IMR-90 (cell line): ENCODE measurements at regions of chr6 and their contacts with region 1.

Region 1: DNA sequence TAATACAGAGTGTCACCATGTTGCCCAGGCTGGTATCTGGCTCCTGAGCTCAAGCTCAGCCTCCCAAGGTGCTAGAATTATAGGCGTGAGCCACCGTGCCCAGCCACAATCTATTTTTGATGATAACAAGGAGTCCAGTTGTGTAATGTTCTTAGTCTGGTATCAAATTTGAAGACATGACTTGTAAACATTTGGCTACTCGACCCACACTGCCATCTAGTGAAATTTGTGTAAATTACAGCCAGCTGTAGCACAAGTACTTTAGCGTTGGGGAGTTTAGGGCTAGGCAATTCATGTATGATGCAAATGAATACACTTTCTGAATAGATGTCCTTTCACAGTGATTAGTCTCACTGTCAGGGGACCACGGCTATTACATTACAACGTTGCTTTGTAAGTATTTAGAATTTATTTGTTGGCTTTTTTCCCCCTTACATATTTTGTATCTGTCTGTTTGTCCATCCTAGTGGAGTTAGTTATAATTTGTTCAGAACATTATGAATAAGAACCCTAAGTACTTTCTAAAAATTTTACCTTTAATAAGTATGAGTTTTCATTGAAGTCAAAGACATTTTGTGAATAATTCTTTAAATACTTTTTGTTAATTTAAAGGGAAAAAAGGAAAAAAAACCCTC is 139.7 kb downstream of the PRDM13 start:
- DNase-seq: peak; percentile 74
- ATAC-seq: peak; percentile 94
- H3K4me3 ChIP-seq: no peak overlapping the region
- H3K27ac ChIP-seq: no peak overlapping the region
- H3K4me1 ChIP-seq: no peaks in the 10 kb centered on the region
- H3K27me3 ChIP-seq: no peaks in the 10 kb centered on the region; the same call in 1 of the 2 replicates
- CTCF ChIP-seq: peak; percentile 82
- POLR2A ChIP-seq: no peak
- RAD21 ChIP-seq: peak; percentile 74

Region 2: GRCh38 chr6:99282491-99283062 is 463.8 kb before region 1 on chr6:
- CTCF ChIA-PET with region 1: no interaction called
- POLR2A ChIA-PET with region 1: no interaction called
- dilution Hi-C with region 1: no loop called
- in situ Hi-C with region 1: no loop called
- intact Hi-C with region 1: loop called (anchors 10 kb)
- DNase-seq: peak; percentile 30
- ATAC-seq: peak; percentile 86
- H3K4me3 ChIP-seq: no peak overlapping the region
- H3K27ac ChIP-seq: no peak overlapping the region
- H3K4me1 ChIP-seq: no peaks in the 10 kb centered on the region
- H3K27me3 ChIP-seq: no peaks in the 10 kb centered on the region
- CTCF ChIP-seq: peak; percentile 54
- POLR2A ChIP-seq: no peak
- RAD21 ChIP-seq: peak; percentile 36; the same call in 1 of the 2 replicates

Region 3: GRCh38 chr6:99467509-99468106 is 278.8 kb before region 1 on chr6:
- CTCF ChIA-PET with region 1: interaction called, 3 read pairs
- POLR2A ChIA-PET with region 1: no interaction called
- dilution Hi-C with region 1: no loop called
- in situ Hi-C with region 1: loop called (anchors 10 kb)
- intact Hi-C with region 1: loop called (anchors 1 kb)
- DNase-seq: peak; percentile 32
- ATAC-seq: peak; percentile 51; the same call in 1 of the 2 replicates
- H3K4me3 ChIP-seq: no peak overlapping the region
- H3K27ac ChIP-seq: no peak overlapping the region
- H3K4me1 ChIP-seq: no peaks in the 10 kb centered on the region
- H3K27me3 ChIP-seq: no peaks in the 10 kb centered on the region
- CTCF ChIP-seq: peak; percentile 68
- POLR2A ChIP-seq: no peak
- RAD21 ChIP-seq: peak; percentile 69

Region 4: DNA sequence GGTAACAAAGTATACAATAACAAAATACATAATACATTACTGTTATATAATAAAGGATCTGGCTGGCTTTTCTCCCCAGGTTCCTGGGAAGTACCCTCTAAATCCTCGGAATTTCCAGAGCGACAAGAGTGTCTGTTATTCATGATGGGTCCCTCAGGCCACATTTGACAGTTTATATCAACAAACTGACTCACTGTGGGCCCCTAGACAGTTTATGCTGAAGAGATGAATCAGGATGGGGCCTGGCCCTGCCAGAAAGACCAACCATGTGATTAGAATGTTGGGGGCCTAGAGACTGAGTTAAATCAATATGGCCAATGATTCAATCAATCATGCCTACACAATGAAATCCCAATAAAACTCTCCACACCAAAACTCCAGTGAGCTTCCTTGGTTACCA is 244.6 kb before region 1 on chr6:
- CTCF ChIA-PET with region 1: no interaction called
- POLR2A ChIA-PET with region 1: no interaction called
- dilution Hi-C with region 1: no loop called
- in situ Hi-C with region 1: no loop called
- intact Hi-C with region 1: no loop called
- DNase-seq: peak; percentile 40
- ATAC-seq: peak; percentile 24; the same call in 1 of the 2 replicates
- H3K4me3 ChIP-seq: no peak overlapping the region
- H3K27ac ChIP-seq: no peak overlapping the region
- H3K4me1 ChIP-seq: peaks cover 8% of the 10 kb centered on the region; the same call in 1 of the 2 replicates
- H3K27me3 ChIP-seq: no peaks in the 10 kb centered on the region
- CTCF ChIP-seq: no peak
- POLR2A ChIP-seq: no peak
- RAD21 ChIP-seq: no peak

Region 5: DNA sequence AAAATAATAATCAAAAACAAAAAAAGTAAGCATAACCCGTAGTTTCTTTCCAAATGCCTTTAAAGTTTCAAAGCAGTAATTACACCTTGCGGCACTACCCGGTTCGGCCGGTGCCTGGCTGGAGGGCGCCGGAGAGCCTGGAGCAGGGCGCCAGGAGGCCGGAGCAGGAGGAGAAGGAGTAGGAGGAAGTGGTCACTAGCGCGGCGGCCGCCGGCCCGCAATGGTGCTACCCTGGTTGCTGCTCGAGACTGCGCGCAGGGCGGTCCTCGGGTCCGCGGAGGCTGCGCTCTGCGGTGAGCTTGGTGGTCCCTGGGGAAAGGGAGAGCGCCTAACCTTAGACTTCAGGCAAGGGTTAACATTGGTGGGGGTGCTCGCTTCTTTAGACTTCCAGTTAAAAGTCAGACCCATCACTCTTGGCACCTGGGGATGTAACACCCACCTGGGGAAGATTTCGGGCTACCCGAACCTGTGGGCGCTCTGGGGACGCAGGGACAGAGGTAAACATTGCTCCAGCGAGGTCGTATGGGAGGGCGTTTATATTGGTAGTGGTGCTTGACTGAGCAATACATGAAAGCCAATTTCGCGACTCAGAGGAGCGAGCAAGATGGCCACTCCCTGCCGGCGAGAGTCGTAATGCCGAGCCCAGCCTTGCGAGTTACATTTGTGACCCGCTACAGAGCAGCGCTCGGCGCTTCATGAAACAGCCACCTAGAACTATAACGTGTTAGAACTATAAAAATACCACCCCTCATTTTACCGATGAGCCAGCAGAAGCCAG is 225.3 kb before region 1 on chr6:
- CTCF ChIA-PET with region 1: no interaction called
- POLR2A ChIA-PET with region 1: no interaction called
- dilution Hi-C with region 1: no loop called
- in situ Hi-C with region 1: no loop called
- intact Hi-C with region 1: loop called (anchors 5 kb)
- DNase-seq: peak; percentile 77
- ATAC-seq: peak; percentile 95
- H3K4me3 ChIP-seq: peak overlapping the region; percentile 87
- H3K27ac ChIP-seq: peak overlapping the region; percentile 96
- H3K4me1 ChIP-seq: peaks cover 2% of the 10 kb centered on the region; the same call in 1 of the 2 replicates
- H3K27me3 ChIP-seq: no peaks in the 10 kb centered on the region
- CTCF ChIP-seq: peak; percentile 80
- POLR2A ChIP-seq: peak; percentile 84
- RAD21 ChIP-seq: peak; percentile 54

Region 6: DNA sequence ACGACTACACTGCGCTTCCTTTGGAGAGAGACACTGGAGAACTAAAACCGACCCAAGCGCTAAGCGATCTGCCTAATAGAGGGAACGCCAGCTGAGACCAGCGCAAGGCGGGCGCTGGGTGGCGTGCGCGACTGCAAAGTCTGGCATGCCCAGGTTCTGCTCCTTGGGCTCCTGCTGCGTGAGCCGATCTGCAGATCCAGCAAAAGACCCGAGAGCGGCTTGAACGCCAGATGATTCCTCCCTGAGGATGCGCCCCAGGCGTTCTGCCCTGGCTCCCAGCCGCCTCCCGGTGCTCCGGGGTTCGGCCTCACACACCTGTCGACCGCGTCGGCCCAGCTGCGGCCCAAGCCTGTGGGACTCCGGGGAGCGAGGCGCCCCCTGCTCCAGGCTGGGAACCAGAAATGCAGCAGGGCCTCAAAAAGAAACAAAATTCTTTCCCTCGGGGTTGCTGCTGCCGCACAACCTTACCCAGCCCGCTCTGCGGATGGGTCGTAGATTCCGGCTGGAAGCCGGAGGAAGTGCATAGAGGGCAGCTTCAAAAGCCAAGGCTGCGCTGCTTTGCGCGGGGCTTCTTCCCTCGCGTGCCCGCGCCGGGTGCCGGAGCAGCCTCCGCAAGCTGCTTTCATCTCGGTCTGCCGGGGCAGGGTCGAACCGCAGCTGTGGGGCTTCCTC is 157.6 kb before region 1 on chr6:
- CTCF ChIA-PET with region 1: interaction called, 4 read pairs
- POLR2A ChIA-PET with region 1: no interaction called
- dilution Hi-C with region 1: no loop called
- in situ Hi-C with region 1: no loop called
- intact Hi-C with region 1: loop called (anchors 1 kb)
- DNase-seq: peak; percentile 59
- ATAC-seq: peak; percentile 90
- H3K4me3 ChIP-seq: peak overlapping the region; percentile 30
- H3K27ac ChIP-seq: no peak overlapping the region
- H3K4me1 ChIP-seq: no peaks in the 10 kb centered on the region
- H3K27me3 ChIP-seq: peaks cover 72% of the 10 kb centered on the region
- CTCF ChIP-seq: peak; percentile 47
- POLR2A ChIP-seq: no peak
- RAD21 ChIP-seq: peak; percentile 47